ENCODE measurements at regions of chr3 and their contacts with region 1.

Region 1: DNA sequence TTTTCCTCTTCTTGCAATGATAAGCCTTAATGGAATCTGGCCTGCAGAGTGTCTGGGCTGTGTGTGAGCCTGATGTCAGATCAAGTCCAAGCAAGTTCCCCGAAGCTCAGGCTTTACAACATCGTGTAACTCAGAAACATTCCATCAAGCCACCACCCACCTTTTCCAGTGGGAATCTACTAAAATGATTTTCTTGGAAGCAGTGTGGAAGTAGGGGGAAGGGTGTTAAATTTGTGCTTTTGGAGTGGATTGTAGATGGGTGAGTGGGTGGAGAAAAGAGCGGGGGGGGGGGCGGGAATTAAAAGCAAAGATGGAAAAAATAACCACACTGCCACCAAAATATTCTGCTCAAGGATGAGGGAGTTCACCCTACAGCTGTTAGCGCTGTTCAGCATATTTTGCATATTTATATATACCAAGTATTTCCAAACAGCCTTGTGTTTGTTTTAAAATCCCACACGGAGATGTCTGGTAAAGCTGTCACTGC is 53.6 kb downstream of the VGLL3 start:
- DNase-seq: peak; percentile 72
- H3K4me3 Mint-ChIP-seq: peak overlapping the region; percentile 25
- H3K27ac Mint-ChIP-seq: peak overlapping the region; percentile 96
- H3K4me1 Mint-ChIP-seq: peaks cover 15% of the 10 kb centered on the region
- H3K27me3 Mint-ChIP-seq: no peaks in the 10 kb centered on the region
- CTCF ChIP-seq: no peak

Region 2: GRCh38 chr3:86785386-86785785 is 152.0 kb before region 1 on chr3:
- CTCF ChIA-PET with region 1: interaction called, 11 read pairs
- POLR2A ChIA-PET with region 1: interaction called, 3 read pairs
- intact Hi-C with region 1: no loop called
- DNase-seq: peak; percentile 35
- H3K4me3 Mint-ChIP-seq: no peak overlapping the region
- H3K27ac Mint-ChIP-seq: no peak overlapping the region
- H3K4me1 Mint-ChIP-seq: peaks cover 6% of the 10 kb centered on the region
- H3K27me3 Mint-ChIP-seq: no peaks in the 10 kb centered on the region
- CTCF ChIP-seq: peak; percentile 35

Region 3: GRCh38 chr3:86793786-86794185 is 143.6 kb before region 1 on chr3:
- CTCF ChIA-PET with region 1: no interaction called
- POLR2A ChIA-PET with region 1: interaction called, 10 read pairs
- intact Hi-C with region 1: no loop called
- DNase-seq: peak; percentile 75
- H3K4me3 Mint-ChIP-seq: peak overlapping the region; percentile 49
- H3K27ac Mint-ChIP-seq: peak overlapping the region; percentile 98
- H3K4me1 Mint-ChIP-seq: peaks cover 22% of the 10 kb centered on the region
- H3K27me3 Mint-ChIP-seq: no peaks in the 10 kb centered on the region
- CTCF ChIP-seq: no peak

Region 4: DNA sequence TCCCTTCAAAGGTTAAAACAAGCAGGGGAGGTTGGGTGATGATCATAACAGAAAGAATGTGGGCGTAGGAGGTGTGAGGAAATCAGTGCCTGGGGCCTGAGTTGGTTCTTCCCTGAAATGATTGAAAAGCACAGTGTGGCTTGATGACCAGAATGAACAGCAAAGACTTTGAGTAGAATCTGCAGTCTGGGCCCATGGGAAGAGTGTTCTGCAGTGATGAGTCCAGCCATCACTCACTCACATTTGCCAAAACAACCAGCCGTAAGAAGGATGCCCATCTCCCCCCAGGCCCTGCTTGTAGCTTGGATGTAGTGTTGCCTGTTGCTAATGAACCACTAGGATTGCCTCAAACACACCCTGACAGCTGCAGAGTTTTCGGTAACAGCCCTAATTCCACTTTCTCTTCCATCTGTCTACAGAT is 14.3 kb before region 1 on chr3:
- CTCF ChIA-PET with region 1: no interaction called
- POLR2A ChIA-PET with region 1: interaction called, 33 read pairs
- intact Hi-C with region 1: no loop called
- DNase-seq: peak; percentile 95
- H3K4me3 Mint-ChIP-seq: peak overlapping the region; percentile 62
- H3K27ac Mint-ChIP-seq: peak overlapping the region; percentile 97
- H3K4me1 Mint-ChIP-seq: peaks cover 28% of the 10 kb centered on the region
- H3K27me3 Mint-ChIP-seq: no peaks in the 10 kb centered on the region
- CTCF ChIP-seq: no peak

Region 5: DNA sequence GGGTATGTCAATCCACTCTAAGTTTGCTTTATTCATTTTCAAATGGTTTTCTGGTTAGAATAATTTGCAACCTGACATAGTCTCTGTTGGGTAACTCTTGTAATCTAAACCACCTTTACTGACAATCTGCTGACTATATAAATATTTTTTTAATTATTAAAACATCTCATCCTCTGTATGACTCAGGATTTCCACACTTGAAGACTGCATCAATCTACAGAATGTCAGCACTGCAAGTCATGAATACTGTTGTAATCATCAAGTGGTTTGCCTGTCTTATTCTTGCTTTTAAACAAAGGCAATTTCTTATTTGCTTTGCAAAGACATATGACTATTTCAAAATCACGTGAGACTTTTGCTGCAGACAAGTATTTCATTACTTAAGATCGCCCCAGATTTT is 11.5 kb after region 1 on chr3:
- CTCF ChIA-PET with region 1: no interaction called
- POLR2A ChIA-PET with region 1: interaction called, 21 read pairs
- intact Hi-C with region 1: no loop called
- DNase-seq: peak; percentile 89
- H3K4me3 Mint-ChIP-seq: peak overlapping the region; percentile 38
- H3K27ac Mint-ChIP-seq: peak overlapping the region; percentile 75
- H3K4me1 Mint-ChIP-seq: peaks cover 45% of the 10 kb centered on the region
- H3K27me3 Mint-ChIP-seq: no peaks in the 10 kb centered on the region
- CTCF ChIP-seq: no peak